IMR-90 (cell line): ENCODE measurements at regions of chr6 and their contacts with region 1.

Region 1: GRCh38 chr6:31729515-31729978 is 448 bp upstream of the DDAH2 start:
- DNase-seq: peak; percentile 79
- ATAC-seq: peak; percentile 81
- H3K4me3 ChIP-seq: peak overlapping the region; percentile 85
- H3K27ac ChIP-seq: peak overlapping the region; percentile 85
- H3K4me1 ChIP-seq: peaks cover 7% of the 10 kb centered on the region
- H3K27me3 ChIP-seq: no peaks in the 10 kb centered on the region
- CTCF ChIP-seq: peak; percentile 67
- POLR2A ChIP-seq: no peak
- RAD21 ChIP-seq: peak; percentile 77

Region 2: DNA sequence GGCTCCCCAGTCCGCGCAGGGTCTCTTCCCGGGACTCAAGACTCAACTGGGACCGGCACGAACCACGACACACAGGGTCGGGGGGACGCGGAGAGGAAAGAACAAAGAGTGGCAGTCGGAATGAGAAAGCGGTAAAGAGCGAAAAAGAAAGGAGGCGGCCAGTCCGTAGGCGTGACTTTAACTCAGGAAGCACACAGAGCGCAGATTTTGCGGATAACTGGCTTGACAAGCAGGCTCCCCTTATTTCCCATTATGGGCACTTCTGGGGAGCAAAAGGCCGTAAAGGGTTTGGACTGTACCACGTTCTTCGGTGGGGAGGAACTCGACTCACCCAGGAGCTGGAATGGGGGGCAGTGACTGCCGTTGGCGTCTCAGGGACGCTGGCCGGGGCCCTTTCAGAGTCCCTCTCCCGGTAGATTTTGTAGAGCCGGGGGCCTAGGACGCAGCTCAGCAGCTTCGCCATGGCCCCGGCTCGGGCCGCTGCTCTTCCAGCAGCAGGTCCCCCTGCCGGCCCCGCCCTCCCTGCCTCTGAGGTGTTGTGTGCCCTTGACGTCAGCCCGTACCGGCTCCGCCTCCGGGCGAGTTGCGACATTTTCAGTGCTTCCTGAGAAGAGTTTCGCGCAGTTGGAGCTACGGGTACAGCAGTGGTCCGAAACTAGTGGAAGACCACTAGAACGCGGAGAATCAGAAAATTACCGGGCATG is 26.6 kb before region 1 on chr6 and contains the start of gene ABHD16A:
- CTCF ChIA-PET with region 1: no interaction called
- POLR2A ChIA-PET with region 1: interaction called, 11 read pairs
- dilution Hi-C with region 1: no loop called
- in situ Hi-C with region 1: no loop called
- intact Hi-C with region 1: loop called (anchors 2 kb)
- DNase-seq: peak; percentile 98
- ATAC-seq: peak; percentile 94
- H3K4me3 ChIP-seq: peak within 1 kb of the TSS; percentile 67
- H3K27ac ChIP-seq: peak within 1 kb of the TSS; percentile 82
- H3K4me1 ChIP-seq: peaks cover 6% of the 10 kb centered on the region
- H3K27me3 ChIP-seq: no peaks in the 10 kb centered on the region
- CTCF ChIP-seq: no peak
- POLR2A ChIP-seq: peak; percentile 91
- RAD21 ChIP-seq: no peak
- total RNA-seq, gene ABHD16A: 30.3 and 35.1 TPM in 2 replicates

Region 3: DNA sequence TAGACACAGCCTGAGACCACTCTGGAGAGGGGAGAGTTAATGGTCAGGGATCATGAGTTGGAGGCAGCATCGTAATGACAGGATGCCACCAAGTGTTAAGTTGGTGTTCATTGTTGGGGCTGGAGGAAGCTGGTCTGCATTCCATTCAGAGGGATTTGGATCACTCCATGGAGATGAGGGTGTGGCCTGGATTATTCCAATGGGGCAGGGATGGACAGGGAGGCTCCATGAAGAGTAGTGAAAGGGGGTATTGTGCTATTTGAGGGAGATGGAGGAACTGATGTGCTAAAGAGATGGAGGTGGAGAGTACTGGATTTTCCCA is 34.0 kb after region 1 on chr6:
- CTCF ChIA-PET with region 1: no interaction called
- POLR2A ChIA-PET with region 1: no interaction called
- dilution Hi-C with region 1: no loop called
- in situ Hi-C with region 1: no loop called
- intact Hi-C with region 1: no loop called
- DNase-seq: peak; percentile 21
- ATAC-seq: peak; percentile 88
- H3K4me3 ChIP-seq: no peak overlapping the region
- H3K27ac ChIP-seq: no peak overlapping the region
- H3K4me1 ChIP-seq: peaks cover 4% of the 10 kb centered on the region
- H3K27me3 ChIP-seq: no peaks in the 10 kb centered on the region
- CTCF ChIP-seq: no peak
- POLR2A ChIP-seq: no peak
- RAD21 ChIP-seq: no peak